ENCODE measurements at regions of chr2 and their contacts with region 1.

Region 1: DNA sequence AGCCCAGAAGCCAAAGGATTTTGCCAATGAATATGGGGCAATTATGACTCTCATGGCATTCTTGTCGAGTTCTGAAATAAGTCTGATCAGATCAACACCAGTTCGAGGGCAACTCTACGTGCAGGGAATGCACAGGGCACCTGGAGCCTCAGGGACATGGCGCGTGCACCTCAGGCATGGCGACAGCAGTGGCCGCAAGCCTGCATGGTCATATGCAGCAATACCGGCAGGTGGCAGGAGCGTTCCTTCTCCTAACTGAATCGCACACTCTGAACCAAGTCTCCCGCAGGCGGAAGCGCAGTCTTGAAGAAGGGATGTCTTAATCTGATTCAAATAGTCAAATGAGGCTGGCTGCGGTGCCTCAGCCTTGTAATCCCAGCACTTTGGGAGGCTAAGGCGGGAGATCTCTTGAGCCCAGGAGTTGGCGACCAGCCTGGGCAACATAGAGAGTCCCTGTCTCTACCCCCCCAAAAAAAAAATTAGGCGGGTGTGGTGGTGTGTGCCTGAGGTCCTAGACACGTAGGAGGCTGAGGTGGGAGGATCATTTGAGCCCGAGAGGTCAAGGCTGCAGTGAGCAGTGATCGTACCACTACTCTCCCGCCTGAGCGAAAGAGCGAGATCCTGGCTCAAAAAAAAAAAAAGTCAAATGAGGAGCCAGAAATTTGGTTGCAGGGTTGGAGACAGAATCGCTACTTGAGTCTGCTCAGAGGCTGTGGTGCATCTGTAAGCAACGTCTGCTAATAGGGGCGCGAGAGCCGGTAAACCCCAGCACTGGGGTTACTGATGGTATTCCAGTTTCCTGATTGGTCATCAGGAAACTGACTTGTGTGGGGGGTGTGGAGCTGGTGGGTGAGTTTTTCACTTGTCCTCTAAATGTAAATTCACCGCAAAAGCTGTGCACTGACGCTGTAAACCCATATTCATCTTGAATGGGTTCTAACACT is 28.8 kb downstream of the FHL2 start:
- DNase-seq: peak; percentile 62 to 85 (median 80)
- ATAC-seq: peak; percentile 98
- H3K4me3 ChIP-seq: no peak overlapping the region
- H3K4me3 Mint-ChIP-seq: peak overlapping the region in 4 of 10 donors; percentile 2 to 49 (median 35)
- H3K27ac ChIP-seq: no peak overlapping the region
- H3K27ac Mint-ChIP-seq: peak overlapping the region in 2 of 9 donors; percentile 33 to 63
- H3K4me1 ChIP-seq: peaks cover 0 to 16% of the 10 kb centered on the region in 2 donors
- H3K4me1 Mint-ChIP-seq: peaks cover 7 to 24% (median 12%) of the 10 kb centered on the region in 7 donors
- H3K27me3 ChIP-seq: no peaks in the 10 kb centered on the region
- H3K27me3 Mint-ChIP-seq: peaks cover 0 to 2% (median 0%) of the 10 kb centered on the region in 5 donors

Region 2: DNA sequence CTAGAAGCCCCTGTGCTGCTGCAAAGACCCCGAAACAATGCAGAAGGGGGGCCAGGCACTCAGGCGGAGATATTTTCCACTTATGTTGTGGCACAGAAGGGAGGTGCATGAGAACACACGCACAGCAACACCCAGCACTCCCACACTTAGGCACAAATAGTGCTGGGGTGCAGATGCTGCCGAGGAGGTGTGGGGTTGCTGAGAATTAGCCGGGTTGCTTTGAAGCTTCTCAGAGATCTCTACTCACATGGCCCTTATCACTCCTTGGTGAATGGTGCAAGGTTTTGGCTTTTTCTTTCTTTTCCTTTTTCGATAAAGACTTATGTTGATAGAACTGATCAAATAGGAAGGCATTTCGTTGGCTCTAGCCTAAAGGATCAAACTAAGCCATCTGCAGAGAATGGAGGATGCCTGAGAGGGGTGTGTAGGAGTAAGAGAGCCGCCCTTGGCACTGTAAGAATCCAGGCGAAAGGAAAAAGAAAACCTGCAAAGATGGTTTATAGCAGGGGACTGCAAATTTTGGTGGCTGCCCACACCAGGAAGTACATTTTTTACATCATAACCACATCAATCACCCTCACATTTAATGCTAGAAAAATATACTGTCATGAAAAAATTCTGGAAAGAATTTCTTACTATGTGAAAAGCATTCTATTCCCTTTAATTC is 56.7 kb after region 1 on chr2:
- CTCF ChIA-PET with region 1: no interaction called
- POLR2A ChIA-PET with region 1: no interaction called
- intact Hi-C with region 1: loop called in 1 of 2 experiments (anchors 2 kb)
- DNase-seq: peak in 6 of 9 donors; percentile 11 to 35 (median 24)
- ATAC-seq: peak; percentile 67
- H3K4me3 ChIP-seq: peak overlapping the region; percentile 34
- H3K4me3 Mint-ChIP-seq: peak overlapping the region; percentile 1 to 85 (median 73)
- H3K27ac ChIP-seq: no peak overlapping the region
- H3K27ac Mint-ChIP-seq: peak overlapping the region in 7 of 9 donors; percentile 6 to 87 (median 61)
- H3K4me1 ChIP-seq: peaks cover 8 to 22% of the 10 kb centered on the region in 2 donors
- H3K4me1 Mint-ChIP-seq: peaks cover 17 to 33% (median 24%) of the 10 kb centered on the region in 7 donors
- H3K27me3 ChIP-seq: no peaks in the 10 kb centered on the region
- H3K27me3 Mint-ChIP-seq: peaks cover 0 to 30% (median 8%) of the 10 kb centered on the region in 5 donors

Region 3: DNA sequence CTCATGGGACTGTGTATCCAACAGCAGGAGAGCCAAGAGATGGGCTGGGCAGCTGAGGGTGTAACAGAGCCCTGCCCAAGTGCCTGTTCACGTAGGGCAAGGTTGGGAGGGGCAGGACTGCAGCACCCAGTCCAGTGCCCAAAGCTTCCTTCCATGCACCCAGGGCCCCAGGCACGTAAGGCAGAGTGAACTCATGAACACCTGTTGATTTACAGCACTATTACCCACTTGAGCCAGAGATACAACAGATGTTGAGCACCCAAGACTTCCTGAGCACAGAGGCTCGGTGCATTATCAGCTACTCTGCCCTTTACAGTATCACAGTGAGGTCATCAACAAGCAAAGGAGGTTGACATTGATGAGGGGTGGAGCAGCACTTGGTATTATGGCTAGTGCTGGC is 79.1 kb after region 1 on chr2:
- CTCF ChIA-PET with region 1: no interaction called
- POLR2A ChIA-PET with region 1: no interaction called
- intact Hi-C with region 1: no loop called
- DNase-seq: no peak
- ATAC-seq: no peak
- H3K4me3 ChIP-seq: no peak overlapping the region
- H3K4me3 Mint-ChIP-seq: no peak overlapping the region
- H3K27ac ChIP-seq: no peak overlapping the region
- H3K27ac Mint-ChIP-seq: no peak overlapping the region
- H3K4me1 ChIP-seq: no peaks in the 10 kb centered on the region
- H3K4me1 Mint-ChIP-seq: no peaks in the 10 kb centered on the region
- H3K27me3 ChIP-seq: no peaks in the 10 kb centered on the region
- H3K27me3 Mint-ChIP-seq: peaks cover 7 to 24% (median 13%) of the 10 kb centered on the region in 5 donors

Region 4: DNA sequence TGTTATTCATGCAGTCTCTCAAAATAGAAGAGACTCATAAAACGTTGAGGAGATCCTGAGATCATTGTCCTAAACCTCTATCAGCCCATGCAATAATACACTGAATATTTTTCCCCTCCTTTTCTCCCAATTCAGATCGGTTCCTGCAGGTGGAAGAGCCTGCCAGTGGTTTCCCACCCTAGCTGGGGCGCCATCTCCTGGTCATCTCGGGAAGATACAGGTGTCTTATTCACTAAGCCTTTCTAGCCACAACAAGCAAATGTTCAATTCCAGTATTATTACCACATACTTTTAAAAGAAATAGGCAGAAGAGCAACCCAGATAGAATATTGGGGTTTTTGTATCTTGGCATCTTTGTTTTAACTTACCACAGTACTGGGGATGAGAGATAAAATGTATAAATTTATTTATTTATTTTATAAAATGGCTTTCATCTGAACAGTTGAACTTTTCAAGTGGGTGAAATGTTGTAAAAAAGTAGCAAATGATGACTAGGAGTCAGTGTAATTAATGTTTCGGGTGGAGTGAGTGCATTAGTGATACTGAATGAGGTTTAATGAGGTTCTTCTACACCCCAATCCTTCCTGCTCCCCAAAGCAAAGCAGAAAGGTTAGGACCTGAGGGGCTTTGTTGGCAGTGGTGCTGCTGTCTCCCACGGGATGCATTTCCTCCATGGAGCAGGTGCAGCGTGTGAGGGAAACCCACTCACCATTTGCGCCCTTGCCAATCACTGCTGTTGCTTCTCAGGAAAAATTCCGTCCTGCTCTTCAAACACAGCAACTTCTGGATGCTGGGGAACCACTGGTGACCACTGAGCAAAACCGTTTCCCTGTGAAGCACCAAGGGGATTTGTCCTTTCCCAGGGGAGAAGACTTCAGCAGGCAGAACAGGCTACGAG is 176.0 kb after region 1 on chr2:
- CTCF ChIA-PET with region 1: interaction called, 4 read pairs
- POLR2A ChIA-PET with region 1: no interaction called
- intact Hi-C with region 1: loop called (anchors 1 kb)
- DNase-seq: peak; percentile 32 to 65 (median 58)
- ATAC-seq: peak; percentile 73
- H3K4me3 ChIP-seq: peak overlapping the region; percentile 31
- H3K4me3 Mint-ChIP-seq: peak overlapping the region in 8 of 10 donors; percentile 31 to 70 (median 63)
- H3K27ac ChIP-seq: peak overlapping the region; percentile 18
- H3K27ac Mint-ChIP-seq: peak overlapping the region in 6 of 9 donors; percentile 0 to 88 (median 36)
- H3K4me1 ChIP-seq: peaks cover 0 to 12% of the 10 kb centered on the region in 2 donors
- H3K4me1 Mint-ChIP-seq: peaks cover 6 to 16% (median 9%) of the 10 kb centered on the region in 7 donors
- H3K27me3 ChIP-seq: no peaks in the 10 kb centered on the region
- H3K27me3 Mint-ChIP-seq: peaks cover 0 to 17% (median 6%) of the 10 kb centered on the region in 5 donors

Region 5: GRCh38 chr2:106542811-106543259 is 1172.8 kb after region 1 on chr2:
- CTCF ChIA-PET with region 1: no interaction called
- POLR2A ChIA-PET with region 1: no interaction called
- intact Hi-C with region 1: loop called in 1 of 2 experiments (anchors 1 kb)
- DNase-seq: peak; percentile 43 to 77 (median 62)
- ATAC-seq: peak; percentile 95
- H3K4me3 ChIP-seq: no peak overlapping the region
- H3K4me3 Mint-ChIP-seq: peak overlapping the region; percentile 48 to 90 (median 80)
- H3K27ac ChIP-seq: no peak overlapping the region
- H3K27ac Mint-ChIP-seq: peak overlapping the region in 2 of 9 donors; percentile 67 to 80
- H3K4me1 ChIP-seq: no peaks in the 10 kb centered on the region
- H3K4me1 Mint-ChIP-seq: peaks cover 0 to 5% (median 4%) of the 10 kb centered on the region in 7 donors
- H3K27me3 ChIP-seq: no peaks in the 10 kb centered on the region
- H3K27me3 Mint-ChIP-seq: peaks cover 16 to 35% (median 19%) of the 10 kb centered on the region in 5 donors